ENCODE measurements at regions of chr3 and their contacts with region 1.

Region 1: DNA sequence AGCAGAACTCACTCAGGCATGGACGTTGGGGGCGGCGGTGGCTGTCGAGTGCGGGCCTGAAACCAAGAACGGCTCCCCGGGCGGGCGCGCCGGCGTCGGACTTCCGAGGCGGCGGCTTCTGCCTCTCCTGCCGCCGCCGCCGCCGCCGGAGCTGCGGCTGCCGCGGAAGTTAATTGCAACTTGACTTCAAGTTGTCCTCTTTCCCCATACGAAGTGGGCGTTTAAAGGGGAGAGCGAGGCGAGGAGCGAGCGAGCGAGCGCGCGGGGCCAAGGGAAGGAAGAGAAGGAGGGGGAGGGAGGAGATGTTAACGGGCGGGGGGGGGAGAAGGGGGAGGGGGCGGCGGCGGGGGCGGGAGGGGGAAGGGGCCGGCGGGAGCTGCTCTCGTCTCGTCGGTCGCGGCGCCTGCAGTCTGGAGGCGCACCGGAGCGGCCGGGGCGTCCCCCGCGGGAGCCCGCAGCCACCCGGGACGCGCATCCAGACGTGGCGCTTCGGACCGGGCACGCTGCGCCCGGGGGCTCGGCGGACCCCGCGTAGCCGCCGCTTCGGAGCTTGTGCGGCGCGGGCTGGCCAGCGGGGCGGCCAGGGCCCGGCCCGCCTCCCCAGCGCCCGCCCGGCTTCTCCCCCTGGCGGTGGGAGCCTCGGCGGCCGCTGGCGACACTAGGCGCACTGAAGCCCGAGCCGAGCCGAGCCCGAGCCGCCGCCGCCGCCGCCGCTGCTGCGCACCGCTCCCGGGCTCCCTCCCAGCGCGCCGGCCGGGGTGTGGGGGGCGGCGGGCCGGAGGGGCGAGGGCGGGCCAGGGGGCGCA is 19.7 kb upstream of the SATB1 start:
- DNase-seq: no peak

Region 2: DNA sequence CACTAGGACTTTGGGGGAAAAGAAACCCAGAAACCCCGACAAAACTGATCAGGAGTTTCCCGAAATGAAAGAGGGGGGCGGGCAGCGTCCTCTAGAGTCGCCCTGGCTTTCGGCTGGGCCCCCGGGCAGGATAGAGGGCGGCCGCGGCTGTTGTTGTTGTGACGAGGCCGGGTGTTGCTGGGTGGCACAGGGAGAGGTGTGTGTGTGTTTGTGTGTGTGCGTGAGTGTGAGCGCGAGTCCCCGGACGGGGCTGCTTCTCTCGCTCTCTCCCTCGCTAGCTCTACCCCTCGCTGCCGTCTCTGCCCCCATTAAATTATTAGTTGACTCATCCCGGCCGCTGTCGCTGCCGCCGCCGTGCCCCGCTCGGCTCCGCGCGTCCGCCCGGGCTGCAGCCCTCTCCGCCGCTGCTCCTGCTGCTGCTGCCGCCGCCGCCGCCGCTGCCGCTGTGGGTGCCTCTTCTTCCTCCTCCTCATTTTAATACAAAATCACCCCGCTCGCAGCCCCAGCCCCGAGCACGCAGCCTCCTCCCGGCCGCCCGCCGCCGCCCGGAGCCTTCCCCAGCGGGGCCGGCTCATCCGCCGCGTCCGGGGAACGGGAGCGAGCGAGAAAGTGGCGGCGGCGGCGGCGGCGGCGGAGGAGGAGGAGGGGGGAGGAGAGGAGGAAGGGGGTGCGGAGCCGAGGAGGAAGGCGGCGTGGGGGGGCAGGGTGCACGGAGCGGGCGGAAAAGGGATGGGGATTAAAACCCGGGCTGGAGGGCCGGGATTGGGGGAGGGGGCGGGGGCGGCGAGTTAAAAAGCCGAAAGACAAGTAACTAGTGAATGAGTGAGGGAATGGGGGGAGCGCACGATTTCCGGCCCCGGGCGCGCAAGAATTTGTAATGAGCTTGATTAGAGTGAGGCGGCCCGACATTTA is 19.8 kb before region 1 on chr3 and contains the start of gene SATB1:
- intact Hi-C with region 1: loop called (anchors 2 kb)
- DNase-seq: peak; percentile 93
- total RNA-seq, gene SATB1: 56.9 TPM

Region 3: DNA sequence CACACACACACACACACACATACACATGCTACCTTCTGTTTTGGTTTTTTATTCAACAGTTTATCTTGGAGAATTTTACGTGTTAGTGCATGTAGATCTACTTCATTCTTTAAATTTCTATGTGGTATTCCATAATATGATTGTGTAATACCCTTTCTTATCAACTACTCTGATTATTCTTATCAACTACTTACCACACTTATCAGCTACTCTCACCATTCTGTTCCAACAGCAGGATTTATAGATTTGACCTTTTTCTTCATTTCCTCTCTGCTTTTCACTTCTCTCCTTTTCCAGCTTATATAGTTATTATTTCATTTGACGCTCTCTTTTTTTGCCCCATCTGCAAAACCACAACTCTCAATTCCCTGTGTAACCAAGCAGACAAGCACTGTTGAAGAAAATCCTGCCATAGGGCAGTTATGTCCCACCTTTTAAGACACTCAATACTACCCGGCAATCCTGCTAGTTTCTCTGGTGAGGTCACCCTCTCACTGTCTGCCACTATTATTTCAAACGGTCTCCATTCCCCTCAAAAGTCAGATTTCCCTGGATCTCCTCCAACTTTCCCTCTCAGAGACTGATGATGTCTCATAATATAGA is 37.2 kb after region 1 on chr3:
- intact Hi-C with region 1: no loop called
- DNase-seq: no peak

Region 4: DNA sequence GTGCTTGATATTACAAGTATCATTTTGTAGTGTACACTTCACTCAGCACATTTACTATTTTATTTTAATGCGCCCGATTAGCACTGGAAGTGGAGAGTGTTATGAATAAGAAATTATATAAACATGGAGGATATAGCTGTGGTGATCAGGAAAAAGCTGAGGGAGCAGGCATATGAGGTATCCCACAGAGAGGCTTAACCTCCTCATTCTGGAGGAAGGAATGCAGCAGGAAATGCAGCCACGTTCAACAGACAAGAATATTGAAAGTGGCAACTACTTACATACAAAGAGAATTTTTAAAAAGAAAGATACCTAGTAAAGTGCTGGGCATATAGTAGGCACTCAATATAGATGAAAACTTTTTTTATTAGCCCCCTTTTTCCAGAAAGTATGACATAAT is 146.3 kb after region 1 on chr3:
- intact Hi-C with region 1: no loop called
- DNase-seq: no peak